Colonic mucosa (tissue), 4 donors: ENCODE measurements at regions of chr14 and their contacts with region 1.

Region 1: GRCh38 chr14:100645192-100645990 is 58.2 kb upstream of the BEGAIN start:
- DNase-seq: peak; percentile 97
- H3K4me3 ChIP-seq: no peak overlapping the region
- H3K27ac ChIP-seq: no peak overlapping the region
- H3K4me1 ChIP-seq: peaks cover 8% of the 10 kb centered on the region
- H3K27me3 ChIP-seq: no peaks in the 10 kb centered on the region
- CTCF ChIP-seq: peak; percentile 83

Region 2: GRCh38 chr14:100440187-100440631 is 205.2 kb before region 1 on chr14:
- intact Hi-C with region 1: loop called (anchors 2 kb)
- DNase-seq: peak; percentile 84
- H3K4me3 ChIP-seq: no peak overlapping the region
- H3K27ac ChIP-seq: peak overlapping the region; percentile 81
- H3K4me1 ChIP-seq: peaks cover 18% of the 10 kb centered on the region
- H3K27me3 ChIP-seq: no peaks in the 10 kb centered on the region
- CTCF ChIP-seq: peak; percentile 52

Region 3: DNA sequence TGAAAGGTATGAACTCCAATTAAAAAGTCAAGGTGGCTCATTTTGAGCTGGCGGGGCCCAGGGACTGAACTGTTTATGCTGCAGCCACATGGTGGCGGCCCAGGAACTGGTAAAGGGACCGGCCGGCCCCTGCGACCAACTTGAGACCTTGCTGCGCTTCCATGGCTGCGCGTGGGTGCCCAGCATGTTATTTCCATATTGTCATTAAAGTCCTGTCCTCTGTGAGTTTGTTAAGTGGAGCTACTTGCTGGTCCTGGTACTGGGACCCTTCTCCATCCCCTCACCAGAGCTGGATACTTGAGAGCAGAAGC is 120.5 kb before region 1 on chr14:
- intact Hi-C with region 1: loop called (anchors 10 kb)
- DNase-seq: peak; percentile 30
- H3K4me3 ChIP-seq: no peak overlapping the region
- H3K27ac ChIP-seq: no peak overlapping the region
- H3K4me1 ChIP-seq: no peaks in the 10 kb centered on the region
- H3K27me3 ChIP-seq: no peaks in the 10 kb centered on the region
- CTCF ChIP-seq: peak; percentile 33

Region 4: GRCh38 chr14:101040538-101041442 is 395.4 kb after region 1 on chr14:
- intact Hi-C with region 1: no loop called
- DNase-seq: no peak
- H3K4me3 ChIP-seq: no peak overlapping the region
- H3K27ac ChIP-seq: no peak overlapping the region
- H3K4me1 ChIP-seq: no peaks in the 10 kb centered on the region
- H3K27me3 ChIP-seq: no peaks in the 10 kb centered on the region
- CTCF ChIP-seq: no peak